ENCODE measurements at regions of chr13 and their contacts with region 1.

Region 1: DNA sequence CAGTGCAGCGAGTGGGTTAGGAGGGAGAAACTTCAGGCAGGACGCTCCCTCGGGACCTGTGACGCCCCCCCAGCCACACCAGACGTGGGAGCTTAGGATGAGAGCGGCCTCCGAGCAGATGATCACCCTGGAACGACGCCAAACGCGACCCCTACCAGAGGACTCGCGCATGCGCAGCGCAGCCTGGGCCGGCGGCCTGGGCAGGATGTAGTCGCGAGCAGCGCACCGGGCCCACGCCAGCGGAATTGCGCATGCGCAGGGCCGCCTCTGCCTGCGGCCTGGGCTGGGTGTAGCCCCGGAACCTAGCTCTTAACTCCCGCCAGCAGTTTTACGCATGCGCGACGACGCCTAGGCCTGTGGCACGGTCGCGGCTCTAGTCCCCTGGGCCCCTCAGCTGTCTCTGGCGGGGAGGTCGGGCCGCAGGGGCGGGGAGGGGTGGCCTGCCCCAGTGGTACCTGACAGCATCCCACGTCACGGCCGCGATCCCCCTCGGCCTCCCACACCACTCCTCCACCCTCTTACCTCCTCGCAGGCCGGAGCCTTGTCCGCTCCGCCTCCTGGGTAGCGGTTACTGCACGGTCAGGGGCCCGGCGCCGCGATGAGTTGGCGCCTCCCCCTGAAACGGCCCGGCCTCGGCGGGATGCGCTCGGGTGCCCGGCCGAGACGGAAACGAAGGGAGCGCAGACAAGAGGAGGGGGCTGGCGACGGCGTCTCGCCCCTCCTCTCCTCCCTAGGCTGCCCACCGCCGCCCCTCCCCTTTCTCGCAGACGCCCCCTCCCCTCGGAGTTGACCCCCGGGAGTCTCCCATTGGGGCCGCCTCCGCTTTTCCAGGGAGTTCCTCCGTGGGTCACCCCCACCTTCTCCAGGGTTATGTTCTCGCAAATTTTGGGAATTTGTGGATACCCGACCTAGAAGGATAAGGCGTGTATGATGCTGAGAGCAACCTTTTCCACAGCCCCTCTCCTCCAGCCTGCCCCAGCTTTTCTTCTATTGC is at the start of gene RCBTB2:
- DNase-seq: peak; percentile 95 to 100 (median 99)
- ATAC-seq: peak; percentile 88
- H3K4me3 ChIP-seq: peak within 1 kb of the TSS; percentile 94
- H3K4me3 Mint-ChIP-seq: peak within 1 kb of the TSS; percentile 97
- H3K27ac ChIP-seq: peak within 1 kb of the TSS; percentile 93 to 96
- H3K27ac Mint-ChIP-seq: peak within 1 kb of the TSS; percentile 90
- H3K4me1 ChIP-seq: peaks cover 31% of the 10 kb centered on the region
- H3K4me1 Mint-ChIP-seq: peaks cover 30% of the 10 kb centered on the region
- H3K27me3 ChIP-seq: no peaks in the 10 kb centered on the region
- H3K27me3 Mint-ChIP-seq: no peaks in the 10 kb centered on the region
- CTCF ChIP-seq: no peak
- total RNA-seq, gene RCBTB2: 6.1 to 6.5 TPM

Region 2: DNA sequence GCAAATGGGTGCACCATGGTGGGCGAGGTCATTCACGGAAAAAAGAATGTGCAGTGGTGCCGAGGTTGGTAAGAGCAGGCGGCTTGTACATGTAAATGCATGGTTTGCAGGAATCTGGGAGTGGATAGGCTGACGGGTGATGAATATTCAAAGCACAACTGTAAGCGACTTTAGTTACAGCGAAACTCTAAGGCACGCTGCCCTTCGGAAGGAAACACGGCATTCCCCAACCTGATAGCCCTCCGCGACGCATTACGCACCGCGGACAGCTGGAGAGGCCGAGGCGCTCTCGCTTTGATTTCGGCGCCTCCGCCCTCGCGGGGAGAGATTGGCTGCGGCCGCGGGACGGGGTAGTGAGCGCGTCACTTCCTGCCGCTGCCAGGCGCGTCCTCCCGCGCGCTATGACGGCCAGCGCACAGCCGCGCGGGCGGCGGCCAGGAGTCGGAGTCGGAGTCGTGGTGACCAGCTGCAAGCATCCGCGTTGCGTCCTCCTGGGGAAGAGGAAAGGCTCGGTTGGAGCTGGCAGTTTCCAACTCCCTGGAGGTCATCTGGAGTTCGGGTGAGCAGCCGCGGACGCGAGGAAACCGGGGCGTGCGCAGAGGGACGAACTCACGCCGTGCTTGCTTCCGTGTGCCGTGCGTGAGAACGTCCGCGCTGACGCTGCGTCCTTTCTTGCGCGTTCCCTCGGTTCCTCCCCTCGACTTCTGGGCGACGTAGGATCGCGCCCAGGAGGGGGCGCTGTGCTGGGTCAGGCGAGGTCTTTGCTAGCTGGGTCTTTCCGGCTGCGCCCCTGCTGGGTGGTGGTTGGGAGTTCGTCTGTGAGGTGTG is 495.2 kb before region 1 on chr13 and contains the start of gene NUDT15:
- CTCF ChIA-PET with region 1: no interaction called
- POLR2A ChIA-PET with region 1: interaction called, 10 read pairs
- intact Hi-C with region 1: no loop called
- DNase-seq: peak; percentile 90 to 99 (median 96)
- ATAC-seq: peak; percentile 90
- H3K4me3 ChIP-seq: peak within 1 kb of the TSS; percentile 68
- H3K4me3 Mint-ChIP-seq: peak within 1 kb of the TSS; percentile 94
- H3K27ac ChIP-seq: peak within 1 kb of the TSS; percentile 79 to 98
- H3K27ac Mint-ChIP-seq: peak within 1 kb of the TSS; percentile 97
- H3K4me1 ChIP-seq: peaks cover 18% of the 10 kb centered on the region
- H3K4me1 Mint-ChIP-seq: peaks cover 42% of the 10 kb centered on the region
- H3K27me3 ChIP-seq: no peaks in the 10 kb centered on the region
- H3K27me3 Mint-ChIP-seq: no peaks in the 10 kb centered on the region
- CTCF ChIP-seq: peak; percentile 100
- total RNA-seq, gene NUDT15: 14.4 to 16.2 TPM

Region 3: GRCh38 chr13:48303359-48304142 is 229.3 kb before region 1 on chr13 and contains the start of gene RB1:
- CTCF ChIA-PET with region 1: no interaction called
- POLR2A ChIA-PET with region 1: interaction called, 17 read pairs
- intact Hi-C with region 1: loop called in 1 of 2 experiments (anchors 5 kb)
- DNase-seq: peak; percentile 77 to 97 (median 85)
- ATAC-seq: peak; percentile 72
- H3K4me3 ChIP-seq: peak within 1 kb of the TSS; percentile 95
- H3K4me3 Mint-ChIP-seq: peak within 1 kb of the TSS; percentile 92
- H3K27ac ChIP-seq: peak within 1 kb of the TSS; percentile 97 to 98
- H3K27ac Mint-ChIP-seq: peak within 1 kb of the TSS; percentile 97
- H3K4me1 ChIP-seq: peaks cover 18% of the 10 kb centered on the region
- H3K4me1 Mint-ChIP-seq: peaks cover 45% of the 10 kb centered on the region
- H3K27me3 ChIP-seq: no peaks in the 10 kb centered on the region
- H3K27me3 Mint-ChIP-seq: no peaks in the 10 kb centered on the region
- CTCF ChIP-seq: no peak
- total RNA-seq, gene RB1: 14.9 to 18.4 TPM

Region 4: GRCh38 chr13:48412881-48413351 is 119.9 kb before region 1 on chr13 and contains the start of gene LPAR6:
- CTCF ChIA-PET with region 1: interaction called, 3 read pairs
- POLR2A ChIA-PET with region 1: interaction called, 39 read pairs
- intact Hi-C with region 1: loop called in 1 of 2 experiments (anchors 5 kb)
- DNase-seq: peak in 4 of 14 experiments; percentile 23 to 87 (median 72)
- ATAC-seq: peak; percentile 52
- H3K4me3 ChIP-seq: peak within 1 kb of the TSS; percentile 88
- H3K4me3 Mint-ChIP-seq: peak within 1 kb of the TSS; percentile 95
- H3K27ac ChIP-seq: peak within 1 kb of the TSS; percentile 67 to 78
- H3K27ac Mint-ChIP-seq: peak within 1 kb of the TSS; percentile 95
- H3K4me1 ChIP-seq: peaks cover 12% of the 10 kb centered on the region
- H3K4me1 Mint-ChIP-seq: peaks cover 44% of the 10 kb centered on the region
- H3K27me3 ChIP-seq: no peaks in the 10 kb centered on the region
- H3K27me3 Mint-ChIP-seq: no peaks in the 10 kb centered on the region
- CTCF ChIP-seq: no peak
- total RNA-seq, gene LPAR6: 15.5 to 19.4 TPM

Region 5: GRCh38 chr13:48492470-48493065 is 40.2 kb before region 1 on chr13:
- CTCF ChIA-PET with region 1: interaction called, 3 read pairs
- POLR2A ChIA-PET with region 1: interaction called, 96 read pairs
- intact Hi-C with region 1: loop called (anchors 1 to 5 kb)
- DNase-seq: peak; percentile 46 to 92 (median 62)
- ATAC-seq: peak; percentile 83
- H3K4me3 ChIP-seq: peak overlapping the region; percentile 58
- H3K4me3 Mint-ChIP-seq: no peak overlapping the region
- H3K27ac ChIP-seq: peak overlapping the region; percentile 57 to 79
- H3K27ac Mint-ChIP-seq: no peak overlapping the region
- H3K4me1 ChIP-seq: peaks cover 54% of the 10 kb centered on the region
- H3K4me1 Mint-ChIP-seq: peaks cover 25% of the 10 kb centered on the region
- H3K27me3 ChIP-seq: no peaks in the 10 kb centered on the region
- H3K27me3 Mint-ChIP-seq: no peaks in the 10 kb centered on the region
- CTCF ChIP-seq: no peak

Region 6: GRCh38 chr13:48510698-48511097 is 22.1 kb before region 1 on chr13:
- CTCF ChIA-PET with region 1: no interaction called
- POLR2A ChIA-PET with region 1: interaction called, 132 read pairs
- intact Hi-C with region 1: loop called (anchors 1 to 2 kb)
- DNase-seq: no peak
- ATAC-seq: no peak
- H3K4me3 ChIP-seq: no peak overlapping the region
- H3K4me3 Mint-ChIP-seq: no peak overlapping the region
- H3K27ac ChIP-seq: no peak overlapping the region
- H3K27ac Mint-ChIP-seq: peak overlapping the region; percentile 30
- H3K4me1 ChIP-seq: peaks cover 20% of the 10 kb centered on the region
- H3K4me1 Mint-ChIP-seq: peaks cover 32% of the 10 kb centered on the region
- H3K27me3 ChIP-seq: no peaks in the 10 kb centered on the region
- H3K27me3 Mint-ChIP-seq: no peaks in the 10 kb centered on the region
- CTCF ChIP-seq: no peak

Region 7: GRCh38 chr13:48580185-48580803 is 47.5 kb after region 1 on chr13:
- CTCF ChIA-PET with region 1: interaction called, 6 read pairs
- POLR2A ChIA-PET with region 1: interaction called, 14 read pairs
- intact Hi-C with region 1: no loop called
- DNase-seq: peak; percentile 54 to 87 (median 72)
- ATAC-seq: peak; percentile 73
- H3K4me3 ChIP-seq: no peak overlapping the region
- H3K4me3 Mint-ChIP-seq: no peak overlapping the region
- H3K27ac ChIP-seq: no peak overlapping the region
- H3K27ac Mint-ChIP-seq: no peak overlapping the region
- H3K4me1 ChIP-seq: peaks cover 7% of the 10 kb centered on the region
- H3K4me1 Mint-ChIP-seq: peaks cover 9% of the 10 kb centered on the region
- H3K27me3 ChIP-seq: peaks cover 0 to 8% of the 10 kb centered on the region in 2 experiments
- H3K27me3 Mint-ChIP-seq: peaks cover 6% of the 10 kb centered on the region
- CTCF ChIP-seq: peak; percentile 91

Region 8: DNA sequence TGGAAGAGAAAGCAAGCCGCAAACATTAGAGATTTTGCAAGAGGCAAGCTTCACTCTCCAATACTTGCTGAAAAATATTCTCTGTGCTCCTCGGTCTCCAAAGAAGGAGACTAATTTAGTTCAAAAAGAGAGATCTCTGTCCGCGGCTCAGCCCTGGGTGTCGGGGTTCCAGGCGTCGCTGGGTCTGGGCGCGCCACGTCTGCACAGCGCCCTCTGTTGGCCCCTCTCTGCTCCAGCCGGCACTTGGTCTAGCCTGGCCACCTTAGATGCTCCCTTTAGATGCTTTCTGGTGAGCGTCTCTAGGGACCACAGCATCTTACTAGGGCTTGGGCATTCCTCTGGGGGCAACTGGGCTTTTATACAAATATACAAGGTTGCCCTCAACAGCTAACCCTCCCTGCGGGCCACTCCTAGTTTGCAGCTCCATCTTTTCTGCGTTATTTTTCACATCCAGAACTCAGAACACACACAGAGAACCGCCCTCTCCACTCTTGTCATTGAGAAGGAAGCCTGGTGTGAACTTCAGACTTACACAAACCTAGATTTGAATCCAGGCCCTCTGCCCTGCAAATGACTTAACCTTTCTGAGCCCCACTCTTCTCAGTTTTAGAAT is 199.3 kb after region 1 on chr13:
- CTCF ChIA-PET with region 1: no interaction called
- POLR2A ChIA-PET with region 1: no interaction called
- intact Hi-C with region 1: no loop called
- DNase-seq: peak; percentile 32 to 81 (median 56)
- ATAC-seq: peak; percentile 88
- H3K4me3 ChIP-seq: peak overlapping the region; percentile 13
- H3K4me3 Mint-ChIP-seq: peak overlapping the region; percentile 79
- H3K27ac ChIP-seq: no peak overlapping the region
- H3K27ac Mint-ChIP-seq: no peak overlapping the region
- H3K4me1 ChIP-seq: peaks cover 5% of the 10 kb centered on the region
- H3K4me1 Mint-ChIP-seq: peaks cover 14% of the 10 kb centered on the region
- H3K27me3 ChIP-seq: no peaks in the 10 kb centered on the region
- H3K27me3 Mint-ChIP-seq: no peaks in the 10 kb centered on the region
- CTCF ChIP-seq: peak; percentile 76

Region 9: DNA sequence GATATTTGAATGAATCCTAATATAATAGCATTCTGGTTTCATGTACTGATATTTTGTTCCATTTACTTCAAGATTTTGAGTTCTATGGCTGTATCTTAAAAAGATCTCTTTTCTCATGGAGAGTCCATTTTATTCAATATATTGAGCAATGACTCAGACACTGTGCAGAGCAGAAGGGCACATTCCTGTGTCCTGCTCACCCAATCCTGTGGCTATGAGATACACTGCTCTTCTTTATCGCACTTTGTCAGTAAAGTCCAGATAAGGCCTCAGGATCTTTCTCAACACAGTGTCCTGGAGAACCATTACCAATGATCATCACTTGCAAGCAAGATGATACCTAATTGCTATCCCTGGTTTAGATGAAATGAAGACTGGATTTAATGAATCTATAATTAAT is 275.9 kb after region 1 on chr13:
- CTCF ChIA-PET with region 1: no interaction called
- POLR2A ChIA-PET with region 1: no interaction called
- intact Hi-C with region 1: no loop called
- DNase-seq: no peak
- ATAC-seq: no peak
- H3K4me3 ChIP-seq: no peak overlapping the region
- H3K4me3 Mint-ChIP-seq: no peak overlapping the region
- H3K27ac ChIP-seq: no peak overlapping the region
- H3K27ac Mint-ChIP-seq: no peak overlapping the region
- H3K4me1 ChIP-seq: peaks cover 18% of the 10 kb centered on the region
- H3K4me1 Mint-ChIP-seq: peaks cover 23% of the 10 kb centered on the region
- H3K27me3 ChIP-seq: no peaks in the 10 kb centered on the region
- H3K27me3 Mint-ChIP-seq: no peaks in the 10 kb centered on the region
- CTCF ChIP-seq: no peak

Region 10: GRCh38 chr13:49376121-49376520 is 843.3 kb after region 1 on chr13:
- CTCF ChIA-PET with region 1: no interaction called
- POLR2A ChIA-PET with region 1: no interaction called
- intact Hi-C with region 1: no loop called
- DNase-seq: no peak
- ATAC-seq: no peak
- H3K4me3 ChIP-seq: no peak overlapping the region
- H3K4me3 Mint-ChIP-seq: no peak overlapping the region
- H3K27ac ChIP-seq: no peak overlapping the region
- H3K27ac Mint-ChIP-seq: no peak overlapping the region
- H3K4me1 ChIP-seq: peaks cover 18% of the 10 kb centered on the region
- H3K4me1 Mint-ChIP-seq: peaks cover 34% of the 10 kb centered on the region
- H3K27me3 ChIP-seq: no peaks in the 10 kb centered on the region
- H3K27me3 Mint-ChIP-seq: peaks cover 5% of the 10 kb centered on the region
- CTCF ChIP-seq: no peak

Measured in CD4-positive, alpha-beta T cell (primary cell).